Gastrocnemius medialis (tissue), 4 donors: ENCODE measurements at regions of chr12 and their contacts with region 1.

Region 1: DNA sequence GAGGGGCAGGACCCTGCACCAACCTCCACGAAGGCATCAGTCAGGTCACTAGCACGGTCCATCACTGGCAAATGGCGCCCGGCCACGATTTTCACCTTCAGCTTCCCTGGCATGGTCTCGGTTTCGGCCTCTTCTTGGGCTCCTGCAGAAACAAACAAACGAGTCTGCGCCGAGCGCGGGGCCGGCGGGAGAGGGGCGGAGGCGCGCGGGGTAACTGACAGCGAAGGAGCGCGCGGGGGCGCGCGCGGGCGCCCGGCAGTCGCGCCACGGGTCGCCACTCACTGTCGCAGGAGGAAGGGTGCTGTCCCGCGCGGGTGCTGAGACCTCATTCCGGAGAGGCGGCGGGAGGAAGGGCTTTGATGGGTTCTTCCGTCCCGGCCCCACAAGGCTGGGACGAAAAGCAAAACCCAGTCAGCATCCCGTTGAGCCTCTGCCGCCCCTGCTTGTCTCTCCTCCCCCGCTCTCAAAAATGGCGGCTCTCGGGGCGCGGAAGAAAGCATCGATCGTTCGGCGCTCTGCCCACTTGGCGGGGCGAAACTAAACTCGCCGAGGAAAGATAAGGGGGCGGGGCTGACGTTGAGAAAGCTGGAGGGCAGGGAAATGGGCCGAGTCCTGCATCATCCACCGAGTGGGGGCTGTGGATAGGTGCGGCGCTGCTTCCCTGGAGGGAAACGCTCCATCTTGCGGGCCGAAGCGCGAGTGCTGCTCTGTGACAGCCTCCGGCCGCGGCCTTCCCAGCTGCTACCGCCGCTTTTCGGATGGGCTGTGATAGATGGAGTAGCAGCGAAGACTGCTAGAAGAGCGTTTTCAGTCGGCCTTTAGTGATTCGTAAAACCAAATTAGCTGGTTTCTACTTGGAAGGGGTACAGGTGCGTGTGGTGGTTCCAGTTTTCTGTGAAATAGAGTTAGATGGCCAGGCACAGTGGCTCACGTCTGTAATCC is at the start of gene C2CD5:
- DNase-seq: peak; percentile 92 to 97
- ATAC-seq: peak; percentile 95 to 96
- H3K4me3 ChIP-seq: peak within 1 kb of the TSS; percentile 64 to 97 (median 92)
- H3K27ac ChIP-seq: peak within 1 kb of the TSS; percentile 86 to 95 (median 92)
- H3K4me1 ChIP-seq: peaks cover 12 to 20% of the 10 kb centered on the region in 2 donors
- H3K27me3 ChIP-seq: no peaks in the 10 kb centered on the region
- CTCF ChIP-seq: peak in 4 of 5 experiments; percentile 9 to 34 (median 23)
- POLR2A ChIP-seq: peak; percentile 64 to 74
- total RNA-seq, gene C2CD5: 5.3 to 9.4 (median 6.9) TPM

Region 2: GRCh38 chr12:22018860-22019259 is 525.4 kb before region 1 on chr12:
- in situ Hi-C with region 1: no loop called
- intact Hi-C with region 1: no loop called
- DNase-seq: no peak
- ATAC-seq: no peak
- H3K4me3 ChIP-seq: no peak overlapping the region
- H3K27ac ChIP-seq: no peak overlapping the region
- H3K4me1 ChIP-seq: no peaks in the 10 kb centered on the region
- H3K27me3 ChIP-seq: no peaks in the 10 kb centered on the region
- CTCF ChIP-seq: peak; percentile 25 to 64 (median 45)
- POLR2A ChIP-seq: no peak

Region 3: GRCh38 chr12:22598141-22598762 is 53.9 kb after region 1 on chr12:
- in situ Hi-C with region 1: no loop called
- intact Hi-C with region 1: no loop called
- DNase-seq: no peak
- ATAC-seq: no peak
- H3K4me3 ChIP-seq: no peak overlapping the region
- H3K27ac ChIP-seq: no peak overlapping the region
- H3K4me1 ChIP-seq: no peaks in the 10 kb centered on the region
- H3K27me3 ChIP-seq: no peaks in the 10 kb centered on the region
- CTCF ChIP-seq: no peak
- POLR2A ChIP-seq: no peak

Region 4: DNA sequence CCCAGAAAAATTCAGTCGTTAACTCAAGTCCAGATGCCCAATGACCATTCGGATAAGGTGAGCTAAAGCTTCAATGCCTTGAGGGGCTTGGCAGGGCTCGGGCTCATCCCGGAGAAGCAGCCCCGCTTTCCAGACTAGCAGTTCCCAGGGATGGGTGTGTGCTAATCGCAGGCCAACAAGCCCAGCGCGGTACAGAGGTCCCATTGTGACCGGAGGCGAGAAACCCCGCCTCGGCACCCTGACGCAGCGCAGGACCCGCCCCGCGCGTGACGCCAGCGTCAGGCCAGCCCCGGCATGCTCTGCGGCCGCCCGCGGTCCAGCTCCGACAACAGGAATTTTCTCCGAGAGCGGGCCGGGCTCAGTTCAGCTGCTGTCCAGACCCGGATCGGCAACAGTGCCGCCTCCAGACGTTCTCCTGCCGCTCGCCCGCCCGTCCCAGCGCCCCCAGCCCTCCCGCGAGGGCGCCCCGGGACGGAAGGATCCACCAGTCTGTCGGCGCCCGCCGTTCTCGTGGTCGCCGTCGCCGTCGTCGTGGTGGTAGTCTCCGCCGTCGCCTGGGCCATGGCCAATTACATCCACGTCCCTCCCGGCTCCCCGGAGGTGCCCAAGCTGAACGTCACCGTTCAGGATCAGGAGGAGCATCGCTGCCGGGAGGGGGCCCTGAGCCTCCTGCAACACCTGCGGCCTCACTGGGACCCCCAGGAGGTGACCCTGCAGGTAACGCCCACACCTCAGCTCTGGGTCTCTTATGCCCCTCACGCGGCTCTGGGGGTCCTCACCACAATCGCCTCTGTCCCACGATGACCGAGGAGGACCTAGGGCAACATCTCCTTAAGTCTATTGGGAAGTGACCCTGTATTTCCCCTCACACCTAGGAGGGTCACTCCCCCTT is 80.8 kb after region 1 on chr12 and contains the start of gene ETNK1:
- in situ Hi-C with region 1: loop called (anchors 5 to 10 kb)
- intact Hi-C with region 1: loop called (anchors 1 kb)
- DNase-seq: peak; percentile 89 to 90
- ATAC-seq: peak; percentile 94 to 96
- H3K4me3 ChIP-seq: peak within 1 kb of the TSS; percentile 86 to 98 (median 91)
- H3K27ac ChIP-seq: peak within 1 kb of the TSS; percentile 95 to 99 (median 98)
- H3K4me1 ChIP-seq: peaks cover 28 to 34% of the 10 kb centered on the region in 2 donors
- H3K27me3 ChIP-seq: no peaks in the 10 kb centered on the region
- CTCF ChIP-seq: no peak
- POLR2A ChIP-seq: peak; percentile 93 to 96
- total RNA-seq, gene ETNK1: 6.5 to 15.1 (median 7.2) TPM

Region 5: DNA sequence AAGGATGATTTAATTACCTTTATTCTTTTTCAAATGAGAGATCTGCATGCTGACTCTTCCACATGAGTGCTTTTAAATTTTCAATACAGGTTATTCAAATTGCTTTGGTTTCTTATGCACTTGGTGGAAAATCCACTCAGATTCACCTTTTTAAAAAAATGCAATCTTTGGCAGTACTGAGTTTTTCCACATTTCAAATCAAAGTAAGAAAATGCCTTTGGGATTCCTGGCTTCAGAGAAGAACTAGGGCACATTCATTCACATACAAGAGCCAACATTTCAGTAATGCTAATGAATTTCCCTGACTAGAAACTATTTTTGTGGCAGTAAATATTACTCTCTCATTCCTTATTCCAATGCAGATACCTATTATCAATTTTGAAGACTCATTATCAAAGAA is 422.9 kb after region 1 on chr12:
- in situ Hi-C with region 1: no loop called
- intact Hi-C with region 1: no loop called
- DNase-seq: no peak
- ATAC-seq: no peak
- H3K4me3 ChIP-seq: no peak overlapping the region
- H3K27ac ChIP-seq: no peak overlapping the region
- H3K4me1 ChIP-seq: no peaks in the 10 kb centered on the region
- H3K27me3 ChIP-seq: no peaks in the 10 kb centered on the region
- CTCF ChIP-seq: no peak
- POLR2A ChIP-seq: no peak